ENCODE measurements at regions of chr15 and their contacts with region 1.

Region 1: DNA sequence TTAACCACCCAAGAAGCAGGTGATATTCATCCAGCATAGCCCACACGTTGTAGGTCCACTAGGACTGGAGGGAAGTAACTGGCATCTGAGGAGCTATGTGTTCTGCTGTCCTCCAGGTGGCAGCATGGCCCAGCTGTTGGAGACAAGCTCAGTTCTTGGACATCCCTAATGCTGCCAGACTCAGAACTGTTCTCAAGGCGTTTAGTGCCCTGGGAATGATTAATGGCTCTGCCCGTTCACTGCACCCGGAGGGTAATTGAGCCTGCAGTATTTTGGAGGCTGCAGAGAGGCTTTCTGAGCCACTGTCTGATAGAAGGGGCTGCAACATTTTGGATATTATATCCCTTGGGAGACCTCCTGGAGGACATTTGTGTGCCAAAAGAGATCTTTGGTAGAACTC is 521.2 kb upstream of the SEMA6D start:
- DNase-seq: peak; percentile 80 to 82
- H3K4me3 ChIP-seq: peak overlapping the region in 1 of 4 experiments; percentile 10; a peak in 1 of 8 replicates
- H3K27ac ChIP-seq: no peak overlapping the region
- H3K4me1 ChIP-seq: peaks cover 0 to 9% (median 1%) of the 10 kb centered on the region in 4 experiments; a peak in 3 of 7 replicates
- H3K27me3 ChIP-seq: no peaks in the 10 kb centered on the region; a peak in 2 of 7 replicates
- CTCF ChIP-seq: peak; percentile 93 to 96 (median 96)
- EP300 ChIP-seq: no peak
- POLR2A ChIP-seq: no peak
- RAD21 ChIP-seq: peak; percentile 99 to 100

Region 2: DNA sequence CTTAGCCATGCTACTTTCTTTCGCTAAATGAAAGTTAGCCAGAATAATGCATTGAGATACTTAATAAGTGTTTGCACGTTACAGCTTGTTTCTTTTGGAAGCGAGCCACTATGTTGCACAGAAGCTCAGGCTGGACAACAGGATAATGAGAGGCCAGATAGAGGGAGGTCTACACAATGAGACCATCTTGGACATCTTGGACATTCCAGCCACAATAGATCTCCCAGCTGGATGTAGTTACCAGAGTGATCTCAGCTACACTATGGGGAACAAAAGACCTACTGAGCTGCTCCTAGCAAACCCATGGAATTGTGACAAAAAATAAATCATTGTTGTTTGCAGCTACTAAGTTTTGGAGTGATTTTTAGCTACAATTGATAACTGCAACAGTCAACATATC is 18.9 kb before region 1 on chr15:
- CTCF ChIA-PET with region 1: no interaction called
- POLR2A ChIA-PET with region 1: no interaction called
- DNase-seq: no peak
- H3K4me3 ChIP-seq: no peak overlapping the region
- H3K27ac ChIP-seq: no peak overlapping the region
- H3K4me1 ChIP-seq: no peaks in the 10 kb centered on the region
- H3K27me3 ChIP-seq: peaks cover 0 to 6% (median 3%) of the 10 kb centered on the region in 4 experiments; a peak in 4 of 7 replicates
- CTCF ChIP-seq: no peak
- EP300 ChIP-seq: no peak
- POLR2A ChIP-seq: no peak
- RAD21 ChIP-seq: no peak

Region 3: GRCh38 chr15:47404877-47405276 is 208.8 kb after region 1 on chr15:
- CTCF ChIA-PET with region 1: interaction called, 14 read pairs
- POLR2A ChIA-PET with region 1: no interaction called
- DNase-seq: no peak
- H3K4me3 ChIP-seq: no peak overlapping the region
- H3K27ac ChIP-seq: no peak overlapping the region
- H3K4me1 ChIP-seq: peaks cover 0 to 11% (median 3%) of the 10 kb centered on the region in 4 experiments; a peak in 3 of 7 replicates
- H3K27me3 ChIP-seq: no peaks in the 10 kb centered on the region
- CTCF ChIP-seq: peak in 1 of 3 experiments; percentile 19; a peak in 1 of 4 replicates
- EP300 ChIP-seq: no peak
- POLR2A ChIP-seq: no peak
- RAD21 ChIP-seq: no peak

Region 4: DNA sequence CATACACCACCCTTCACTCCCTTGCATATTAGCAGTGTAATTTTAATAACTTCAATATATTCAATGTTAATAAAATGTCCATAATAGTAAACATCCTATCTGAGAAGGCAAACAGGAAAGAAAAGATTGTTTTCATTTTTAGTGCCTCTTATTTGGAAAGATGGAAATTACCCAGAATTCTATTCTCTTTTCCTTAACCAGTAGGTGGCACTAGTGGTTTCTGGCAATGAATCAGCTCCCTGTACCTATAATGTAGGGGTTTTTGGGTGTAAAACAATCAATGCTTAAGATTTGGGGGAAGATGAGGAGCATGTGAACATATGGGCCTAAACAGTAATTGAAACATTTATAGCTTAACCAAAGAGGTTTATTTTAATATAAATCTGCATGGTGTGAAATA is 515.6 kb after region 1 on chr15:
- CTCF ChIA-PET with region 1: interaction called, 10 read pairs
- POLR2A ChIA-PET with region 1: no interaction called
- DNase-seq: no peak
- H3K4me3 ChIP-seq: no peak overlapping the region
- H3K27ac ChIP-seq: no peak overlapping the region
- H3K4me1 ChIP-seq: peaks cover 0 to 7% (median under 1%) of the 10 kb centered on the region in 4 experiments; a peak in 2 of 7 replicates
- H3K27me3 ChIP-seq: no peaks in the 10 kb centered on the region; a peak in 1 of 7 replicates
- CTCF ChIP-seq: peak in 2 of 3 experiments; percentile 47 to 61; a peak in 2 of 4 replicates
- EP300 ChIP-seq: no peak
- POLR2A ChIP-seq: no peak
- RAD21 ChIP-seq: peak; percentile 78 to 80

Measured in H1 (cell line).